CD4-positive, alpha-beta memory T cell (primary cell): ENCODE measurements at regions of chr5 and their contacts with region 1.

Region 1: GRCh38 chr5:1568201-1568979 is 44.6 kb upstream of the LPCAT1 start:
- DNase-seq: no peak
- H3K4me3 ChIP-seq: no peak overlapping the region
- H3K4me3 Mint-ChIP-seq: no peak overlapping the region
- H3K27ac ChIP-seq: no peak overlapping the region
- H3K27ac Mint-ChIP-seq: peak overlapping the region in 1 of 7 donors; percentile 30
- H3K4me1 ChIP-seq: no peaks in the 10 kb centered on the region
- H3K4me1 Mint-ChIP-seq: no peaks in the 10 kb centered on the region
- H3K27me3 ChIP-seq: no peaks in the 10 kb centered on the region
- H3K27me3 Mint-ChIP-seq: no peaks in the 10 kb centered on the region

Region 2: GRCh38 chr5:264346-264745 is 1304.0 kb before region 1 on chr5:
- CTCF ChIA-PET with region 1: no interaction called
- POLR2A ChIA-PET with region 1: no interaction called
- intact Hi-C with region 1: loop called (anchors 10 kb)
- DNase-seq: no peak
- H3K4me3 ChIP-seq: no peak overlapping the region
- H3K4me3 Mint-ChIP-seq: no peak overlapping the region
- H3K27ac ChIP-seq: no peak overlapping the region
- H3K27ac Mint-ChIP-seq: peak overlapping the region in 2 of 7 donors; percentile 30 to 46
- H3K4me1 ChIP-seq: no peaks in the 10 kb centered on the region
- H3K4me1 Mint-ChIP-seq: peaks cover 0 to 2% (median 0%) of the 10 kb centered on the region in 4 donors
- H3K27me3 ChIP-seq: no peaks in the 10 kb centered on the region
- H3K27me3 Mint-ChIP-seq: no peaks in the 10 kb centered on the region

Region 3: DNA sequence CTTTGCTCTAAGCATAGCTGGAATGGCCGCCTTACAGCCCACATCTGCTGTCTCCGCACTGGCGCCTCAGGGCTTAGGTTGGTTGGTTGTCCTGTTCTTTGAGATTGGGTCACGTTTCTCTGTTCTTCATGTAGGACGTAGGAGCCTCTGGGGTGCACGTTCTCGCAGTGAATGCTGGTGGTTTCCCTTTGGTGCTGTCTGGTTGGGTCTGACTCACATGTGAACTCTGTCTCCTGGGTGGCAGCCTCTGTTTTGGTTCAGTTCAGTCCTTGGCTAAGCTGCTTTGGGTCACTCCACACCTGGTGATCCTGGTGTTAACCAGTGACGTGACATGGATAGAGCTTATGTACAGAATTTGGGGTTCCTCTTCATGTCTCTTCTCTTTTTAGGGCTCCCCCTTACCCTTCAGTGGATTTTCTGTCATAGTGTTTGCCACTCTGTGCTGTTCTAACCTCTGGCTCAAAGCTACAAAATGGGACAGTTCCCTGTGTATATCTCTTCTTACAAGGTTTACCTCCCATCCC is 32.0 kb before region 1 on chr5:
- CTCF ChIA-PET with region 1: no interaction called
- POLR2A ChIA-PET with region 1: no interaction called
- intact Hi-C with region 1: no loop called
- DNase-seq: peak; percentile 67 to 89 (median 71)
- H3K4me3 ChIP-seq: peak overlapping the region; percentile 26 to 30
- H3K4me3 Mint-ChIP-seq: peak overlapping the region; percentile 77 to 90 (median 84)
- H3K27ac ChIP-seq: peak overlapping the region; percentile 72
- H3K27ac Mint-ChIP-seq: peak overlapping the region; percentile 88 to 98 (median 92)
- H3K4me1 ChIP-seq: peaks cover 26% of the 10 kb centered on the region
- H3K4me1 Mint-ChIP-seq: peaks cover 20 to 35% (median 28%) of the 10 kb centered on the region in 4 donors
- H3K27me3 ChIP-seq: no peaks in the 10 kb centered on the region
- H3K27me3 Mint-ChIP-seq: no peaks in the 10 kb centered on the region